ENCODE measurements at regions of chr11 and their contacts with region 1.

Region 1: DNA sequence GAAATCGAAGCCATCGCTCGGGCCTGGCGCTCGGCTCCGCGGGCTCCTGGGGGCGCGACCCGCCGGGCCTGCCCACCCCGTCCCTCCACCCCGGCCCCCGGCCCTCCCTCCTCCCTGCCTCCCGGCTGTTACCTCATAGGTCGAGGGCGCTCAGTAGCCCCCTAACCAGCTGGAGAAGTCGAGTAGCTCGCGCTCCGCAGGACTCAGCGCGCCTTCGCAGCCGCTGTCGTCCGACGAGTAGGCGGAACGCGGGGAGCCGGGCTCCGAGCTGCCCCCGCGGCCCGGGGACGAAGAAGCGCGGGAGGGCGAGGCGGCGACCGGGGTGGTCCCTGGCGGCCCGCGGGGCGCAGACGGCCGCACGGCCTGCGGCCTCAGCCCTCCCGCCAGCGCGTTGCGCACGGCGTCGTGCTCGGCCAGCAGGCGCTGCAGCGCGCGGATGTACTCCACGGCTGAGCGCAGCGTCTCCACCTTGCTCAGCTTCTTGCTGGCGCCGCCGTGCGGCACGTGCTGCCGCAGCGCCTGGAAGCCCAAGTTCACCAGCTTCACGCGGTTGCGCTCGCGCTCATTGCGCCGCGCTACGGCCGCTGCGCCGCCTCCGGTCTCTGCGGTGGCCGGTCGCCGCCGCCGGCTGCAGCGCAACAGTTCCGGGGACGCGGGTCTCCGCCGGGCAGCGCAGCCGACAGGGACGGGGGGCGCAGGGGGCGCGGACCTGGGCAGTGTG is 627 bp downstream of the ASCL2 start:
- DNase-seq: peak; percentile 61 to 71 (median 62)
- H3K4me3 ChIP-seq: peak overlapping the region; percentile 35 to 73 (median 38)
- H3K4me3 Mint-ChIP-seq: peak overlapping the region; percentile 73 to 84
- H3K27ac ChIP-seq: peak overlapping the region; percentile 70 to 84
- H3K27ac Mint-ChIP-seq: peak overlapping the region in 6 of 7 donors; percentile 40 to 92 (median 82)
- H3K4me1 ChIP-seq: peaks cover 49 to 68% of the 10 kb centered on the region in 2 donors
- H3K4me1 Mint-ChIP-seq: peaks cover 35% of the 10 kb centered on the region
- H3K27me3 ChIP-seq: peaks cover 0 to 14% of the 10 kb centered on the region in 2 donors
- H3K27me3 Mint-ChIP-seq: peaks cover 13 to 35% (median 13%) of the 10 kb centered on the region in 3 donors
- CTCF ChIP-seq: peak; percentile 16

Region 2: DNA sequence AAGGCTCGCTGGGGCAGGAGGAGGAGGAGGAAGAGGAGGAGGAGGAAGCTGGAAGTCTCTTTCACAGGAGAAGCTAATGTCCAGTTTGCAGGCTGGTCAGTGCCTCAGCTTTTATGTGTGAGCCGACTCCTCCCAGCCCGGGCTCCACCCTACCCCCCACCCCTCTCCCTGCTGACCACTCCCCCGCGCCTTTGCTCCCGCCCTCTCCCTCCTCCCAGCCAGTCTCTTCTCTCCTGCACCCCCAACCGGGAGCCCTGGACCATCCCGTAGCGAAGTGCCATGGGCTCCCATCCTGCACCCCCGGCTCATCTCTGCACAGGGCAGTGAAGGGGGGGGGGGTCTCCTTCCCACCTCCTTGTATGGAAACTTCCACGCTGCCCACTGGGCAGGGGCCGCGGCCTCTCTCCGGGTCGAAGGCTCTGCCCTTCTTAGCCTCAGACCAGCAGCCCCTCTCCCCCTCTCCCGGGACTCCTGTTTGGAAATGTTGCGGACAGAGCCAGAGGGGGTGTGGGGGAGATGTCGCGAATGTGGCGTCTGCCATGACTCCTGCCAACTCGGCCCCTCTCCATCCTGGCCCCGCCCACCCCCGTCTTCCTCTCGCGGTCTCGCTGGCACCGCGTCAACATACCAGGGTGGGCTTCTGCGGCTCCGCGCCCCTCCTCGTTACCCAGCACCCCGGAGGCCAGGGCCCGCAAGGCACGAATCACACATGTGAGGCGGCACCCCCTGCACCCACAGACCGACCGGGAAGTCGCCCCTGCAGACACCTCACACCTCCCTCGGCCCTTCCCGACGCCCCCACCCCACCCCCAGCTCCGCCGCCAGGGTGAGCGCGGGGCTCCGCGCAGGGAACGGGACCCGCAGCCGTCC is 132.3 kb before region 1 on chr11:
- intact Hi-C with region 1: no loop called
- DNase-seq: no peak
- H3K4me3 ChIP-seq: no peak overlapping the region
- H3K4me3 Mint-ChIP-seq: peak overlapping the region in 1 of 2 donors; percentile 60
- H3K27ac ChIP-seq: no peak overlapping the region
- H3K27ac Mint-ChIP-seq: no peak overlapping the region
- H3K4me1 ChIP-seq: no peaks in the 10 kb centered on the region
- H3K4me1 Mint-ChIP-seq: peaks cover 5% of the 10 kb centered on the region
- H3K27me3 ChIP-seq: peaks cover 30 to 76% of the 10 kb centered on the region in 2 donors
- H3K27me3 Mint-ChIP-seq: peaks cover 65 to 91% (median 77%) of the 10 kb centered on the region in 3 donors
- CTCF ChIP-seq: no peak

Region 3: DNA sequence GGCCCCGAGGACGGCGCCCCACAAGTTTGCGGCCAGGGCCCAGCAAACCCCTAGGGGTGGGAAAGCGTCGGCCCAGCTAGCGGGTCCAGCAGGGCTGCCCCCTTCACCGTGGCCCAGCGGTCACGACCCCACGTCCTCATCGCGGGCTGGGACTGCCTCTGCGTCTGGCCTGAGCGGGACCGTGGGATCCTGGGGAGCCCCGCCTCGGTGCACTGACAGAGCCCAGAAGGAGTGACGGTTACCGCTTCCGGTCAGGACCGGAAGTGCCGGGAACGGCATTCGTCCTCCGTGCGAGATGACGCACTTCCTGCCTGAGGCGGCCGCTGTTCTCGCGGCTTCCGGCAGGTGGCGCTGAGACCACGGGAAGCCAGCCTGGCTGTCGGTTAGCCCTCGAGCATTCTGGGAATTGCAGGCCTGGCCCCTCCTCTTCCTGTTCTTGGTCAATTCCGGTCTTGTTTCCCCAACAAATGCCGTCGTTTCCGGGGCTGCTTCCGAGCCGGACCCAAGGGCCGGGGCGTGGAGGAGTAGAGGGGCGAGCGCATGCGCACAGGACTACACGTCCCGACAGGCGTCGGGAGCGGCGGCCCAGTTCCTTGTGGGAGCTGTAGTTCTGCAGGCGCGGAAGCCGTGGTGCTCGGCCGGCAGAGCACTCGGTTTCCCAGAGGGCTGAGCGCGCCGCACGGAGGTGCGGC is 130.5 kb after region 1 on chr11 and contains the start of gene TSSC4:
- intact Hi-C with region 1: loop called (anchors 5 kb)
- DNase-seq: peak; percentile 100
- H3K4me3 ChIP-seq: peak within 1 kb of the TSS; percentile 88 to 98 (median 93)
- H3K4me3 Mint-ChIP-seq: peak within 1 kb of the TSS; percentile 84 to 91
- H3K27ac ChIP-seq: peak within 1 kb of the TSS; percentile 94 to 95
- H3K27ac Mint-ChIP-seq: peak within 1 kb of the TSS; percentile 89 to 94 (median 92)
- H3K4me1 ChIP-seq: peaks cover 21 to 26% of the 10 kb centered on the region in 2 donors
- H3K4me1 Mint-ChIP-seq: peaks cover 18% of the 10 kb centered on the region
- H3K27me3 ChIP-seq: no peaks in the 10 kb centered on the region
- H3K27me3 Mint-ChIP-seq: peaks cover 0 to 2% (median 0%) of the 10 kb centered on the region in 3 donors
- CTCF ChIP-seq: peak; percentile 95
- polyA plus RNA-seq, gene TSSC4: 28.1 to 74.6 (median 52.0) TPM